Common myeloid progenitor, CD34-positive (primary cell): ENCODE measurements at regions of chr18 and their contacts with region 1.

Region 1: DNA sequence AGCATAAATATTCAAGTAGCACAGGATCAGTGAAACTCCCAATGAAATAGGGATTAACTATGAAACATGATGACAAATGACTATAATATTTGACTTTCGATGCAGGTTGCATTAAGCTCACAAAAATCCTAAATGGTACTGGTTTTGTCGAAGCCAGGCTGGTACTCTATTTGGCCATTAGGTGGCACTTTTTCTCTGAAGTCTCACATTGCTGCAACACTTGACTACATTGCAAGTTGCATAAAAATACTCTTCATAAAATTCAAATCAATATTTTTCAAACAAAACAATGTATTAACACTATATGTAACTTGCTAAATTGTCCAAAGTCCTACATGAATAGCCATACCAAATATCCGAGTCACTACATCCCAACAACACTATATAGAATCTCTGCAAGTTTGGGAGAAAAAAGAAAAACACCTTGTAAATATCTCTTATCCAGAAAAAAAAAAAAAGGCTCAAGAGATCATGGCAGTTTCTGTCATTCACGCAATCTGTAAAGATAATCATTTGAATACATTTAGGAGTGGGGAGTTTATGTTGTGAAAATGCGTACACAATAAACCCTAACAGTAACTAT is 9.5 kb downstream of the RTTN start:
- DNase-seq: peak; percentile 46 to 72 (median 67)
- H3K4me3 ChIP-seq: no peak overlapping the region
- H3K27ac ChIP-seq: no peak overlapping the region
- H3K4me1 ChIP-seq: no peaks in the 10 kb centered on the region
- H3K27me3 ChIP-seq: no peaks in the 10 kb centered on the region

Region 2: GRCh38 chr18:70072678-70073077 is 123.3 kb before region 1 on chr18:
- CTCF ChIA-PET with region 1: no interaction called
- POLR2A ChIA-PET with region 1: no interaction called
- DNase-seq: peak; percentile 10 to 29 (median 19)
- H3K4me3 ChIP-seq: no peak overlapping the region
- H3K27ac ChIP-seq: no peak overlapping the region
- H3K4me1 ChIP-seq: no peaks in the 10 kb centered on the region
- H3K27me3 ChIP-seq: no peaks in the 10 kb centered on the region

Region 3: GRCh38 chr18:70182548-70182947 is 13.4 kb before region 1 on chr18:
- CTCF ChIA-PET with region 1: interaction called, 21 read pairs
- POLR2A ChIA-PET with region 1: no interaction called
- DNase-seq: no peak
- H3K4me3 ChIP-seq: no peak overlapping the region
- H3K27ac ChIP-seq: no peak overlapping the region
- H3K4me1 ChIP-seq: no peaks in the 10 kb centered on the region
- H3K27me3 ChIP-seq: no peaks in the 10 kb centered on the region

Region 4: GRCh38 chr18:70431203-70431624 is 235.3 kb after region 1 on chr18:
- CTCF ChIA-PET with region 1: interaction called, 118 read pairs
- POLR2A ChIA-PET with region 1: no interaction called
- DNase-seq: no peak
- H3K4me3 ChIP-seq: no peak overlapping the region
- H3K27ac ChIP-seq: no peak overlapping the region
- H3K4me1 ChIP-seq: peaks cover 0 to 4% (median 0%) of the 10 kb centered on the region in 4 experiments
- H3K27me3 ChIP-seq: no peaks in the 10 kb centered on the region

Region 5: GRCh38 chr18:70442933-70443332 is 247.0 kb after region 1 on chr18:
- CTCF ChIA-PET with region 1: interaction called, 19 read pairs
- POLR2A ChIA-PET with region 1: no interaction called
- DNase-seq: peak in 1 of 3 donors; percentile 18
- H3K4me3 ChIP-seq: peak overlapping the region in 1 of 7 experiments; percentile 25
- H3K27ac ChIP-seq: no peak overlapping the region
- H3K4me1 ChIP-seq: no peaks in the 10 kb centered on the region
- H3K27me3 ChIP-seq: no peaks in the 10 kb centered on the region

Region 6: GRCh38 chr18:70448588-70448987 is 252.6 kb after region 1 on chr18:
- CTCF ChIA-PET with region 1: interaction called, 54 read pairs
- POLR2A ChIA-PET with region 1: no interaction called
- DNase-seq: peak; percentile 33 to 77 (median 61)
- H3K4me3 ChIP-seq: no peak overlapping the region
- H3K27ac ChIP-seq: no peak overlapping the region
- H3K4me1 ChIP-seq: no peaks in the 10 kb centered on the region
- H3K27me3 ChIP-seq: no peaks in the 10 kb centered on the region

Region 7: GRCh38 chr18:70454704-70455322 is 258.9 kb after region 1 on chr18:
- CTCF ChIA-PET with region 1: interaction called, 54 read pairs
- POLR2A ChIA-PET with region 1: no interaction called
- DNase-seq: peak; percentile 60 to 82 (median 74)
- H3K4me3 ChIP-seq: no peak overlapping the region
- H3K27ac ChIP-seq: no peak overlapping the region
- H3K4me1 ChIP-seq: peaks cover 0 to 8% (median 0%) of the 10 kb centered on the region in 4 experiments
- H3K27me3 ChIP-seq: no peaks in the 10 kb centered on the region